B cell (primary cell): ENCODE measurements at regions of chr13 and their contacts with region 1.

Region 1: GRCh38 chr13:30114571-30115256 is 192.6 kb downstream of the KATNAL1 start:
- DNase-seq: peak; percentile 92
- ATAC-seq: peak; percentile 93
- H3K4me3 ChIP-seq: peak overlapping the region; percentile 32 to 72 (median 47)
- H3K4me3 Mint-ChIP-seq: peak overlapping the region; percentile 84
- H3K27ac ChIP-seq: no peak overlapping the region
- H3K27ac Mint-ChIP-seq: peak overlapping the region; percentile 66
- H3K4me1 ChIP-seq: peaks cover 6 to 23% of the 10 kb centered on the region in 2 donors
- H3K4me1 Mint-ChIP-seq: peaks cover 28% of the 10 kb centered on the region
- H3K27me3 ChIP-seq: peaks cover 0 to 5% (median 2%) of the 10 kb centered on the region in 4 experiments
- H3K27me3 Mint-ChIP-seq: peaks cover 21% of the 10 kb centered on the region
- CTCF ChIP-seq: peak; percentile 89

Region 2: DNA sequence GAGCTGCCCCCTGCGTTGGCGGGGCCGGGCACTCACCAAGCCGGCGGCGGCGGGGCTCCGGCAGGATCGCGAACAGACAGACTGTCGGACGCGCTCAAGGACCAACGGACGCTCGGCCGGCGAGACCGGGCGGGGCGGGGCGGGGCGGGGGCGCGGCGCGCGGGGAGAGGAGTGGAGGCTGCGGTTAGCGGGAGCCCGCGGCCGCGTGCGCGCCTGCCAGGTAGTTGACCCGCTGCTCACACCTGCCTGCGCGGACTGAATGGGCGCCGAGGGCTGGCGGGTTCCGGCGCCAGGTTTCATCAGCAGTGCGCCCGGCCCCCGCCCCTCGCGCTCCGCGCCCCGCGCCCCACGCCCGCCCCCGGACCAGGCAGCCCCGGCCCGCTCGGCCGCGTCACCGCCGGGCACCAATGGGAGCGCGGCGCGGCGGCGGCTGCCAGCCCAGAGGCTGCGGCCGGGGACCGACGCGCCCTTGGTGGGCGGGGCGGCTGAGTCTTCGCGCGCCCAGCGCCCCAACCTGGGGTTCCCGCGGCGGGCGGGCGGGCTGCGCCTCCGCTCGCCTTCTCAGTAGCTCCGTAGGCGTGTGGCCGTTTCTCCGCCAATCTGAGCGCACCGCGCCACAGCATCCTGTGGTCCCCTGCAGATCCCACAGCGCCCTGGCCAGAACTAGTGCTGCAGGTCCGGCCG is 519.2 kb before region 1 on chr13 and contains the start of gene SLC7A1:
- CTCF ChIA-PET with region 1: no interaction called
- POLR2A ChIA-PET with region 1: no interaction called
- intact Hi-C with region 1: loop called (anchors 2 kb)
- DNase-seq: peak; percentile 91
- ATAC-seq: peak; percentile 91
- H3K4me3 ChIP-seq: peak within 1 kb of the TSS; percentile 49 to 89 (median 68)
- H3K4me3 Mint-ChIP-seq: peak within 1 kb of the TSS; percentile 92
- H3K27ac ChIP-seq: peak within 1 kb of the TSS; percentile 40 to 82
- H3K27ac Mint-ChIP-seq: peak within 1 kb of the TSS; percentile 92
- H3K4me1 ChIP-seq: peaks cover 9 to 13% of the 10 kb centered on the region in 2 donors
- H3K4me1 Mint-ChIP-seq: peaks cover 34% of the 10 kb centered on the region
- H3K27me3 ChIP-seq: no peaks in the 10 kb centered on the region
- H3K27me3 Mint-ChIP-seq: peaks cover 6% of the 10 kb centered on the region
- CTCF ChIP-seq: no peak
- total RNA-seq, gene SLC7A1: 23.1 and 24.2 TPM in 2 replicates

Region 3: DNA sequence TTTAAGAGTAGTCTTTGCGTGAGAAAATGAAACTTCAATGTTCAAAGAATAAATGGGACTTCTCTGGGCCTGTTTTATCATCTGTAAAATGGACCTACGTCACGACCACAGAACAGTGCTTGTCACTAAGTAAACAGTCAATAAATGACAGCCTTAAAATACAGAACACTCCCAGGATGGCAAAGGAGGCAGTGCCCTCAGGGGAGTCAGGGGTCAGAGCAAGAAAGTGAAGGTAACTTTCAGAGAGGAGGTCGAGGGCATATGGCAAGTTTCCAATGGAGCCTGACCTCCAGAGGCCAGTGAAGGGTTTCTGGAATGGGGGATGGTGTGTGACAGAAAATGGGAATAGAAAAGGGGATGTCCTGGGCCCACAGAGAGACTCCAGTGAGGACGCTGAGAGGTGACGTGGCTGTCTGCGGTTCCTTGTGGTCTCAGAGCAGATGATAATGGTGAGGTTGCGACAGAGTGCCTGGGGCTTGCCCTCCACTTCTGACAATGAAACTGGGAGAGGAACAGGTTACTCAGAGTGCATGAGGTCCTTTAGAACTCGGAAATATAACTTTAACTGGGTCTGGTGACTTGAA is 356.1 kb before region 1 on chr13:
- CTCF ChIA-PET with region 1: interaction called, 10 read pairs
- POLR2A ChIA-PET with region 1: no interaction called
- intact Hi-C with region 1: no loop called
- DNase-seq: peak; percentile 73
- ATAC-seq: peak; percentile 76
- H3K4me3 ChIP-seq: no peak overlapping the region
- H3K4me3 Mint-ChIP-seq: peak overlapping the region; percentile 75
- H3K27ac ChIP-seq: peak overlapping the region; percentile 1 to 68
- H3K27ac Mint-ChIP-seq: peak overlapping the region; percentile 80
- H3K4me1 ChIP-seq: peaks cover 9 to 24% of the 10 kb centered on the region in 2 donors
- H3K4me1 Mint-ChIP-seq: peaks cover 30% of the 10 kb centered on the region
- H3K27me3 ChIP-seq: no peaks in the 10 kb centered on the region
- H3K27me3 Mint-ChIP-seq: peaks cover 1% of the 10 kb centered on the region
- CTCF ChIP-seq: no peak

Region 4: DNA sequence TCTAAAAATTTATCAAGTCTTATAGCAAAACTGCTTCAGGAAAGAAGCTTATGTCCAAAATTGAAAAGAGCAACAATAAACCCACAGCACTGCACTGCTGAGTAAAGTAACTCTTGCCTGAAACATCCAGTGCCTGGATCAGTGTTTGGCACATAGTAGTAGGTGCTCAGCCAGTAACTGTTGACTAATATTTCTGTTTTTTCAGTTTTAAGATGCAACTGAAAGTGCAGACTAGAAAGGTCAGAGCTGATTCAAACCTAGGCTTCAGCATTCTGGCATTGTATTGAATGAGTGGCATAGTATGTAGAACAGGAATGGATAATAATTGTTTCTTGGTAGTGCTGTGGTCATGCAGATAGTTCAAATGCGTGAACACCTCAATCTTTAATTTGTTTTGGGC is 331.9 kb before region 1 on chr13:
- CTCF ChIA-PET with region 1: interaction called, 11 read pairs
- POLR2A ChIA-PET with region 1: no interaction called
- intact Hi-C with region 1: no loop called
- DNase-seq: no peak
- ATAC-seq: no peak
- H3K4me3 ChIP-seq: no peak overlapping the region
- H3K4me3 Mint-ChIP-seq: no peak overlapping the region
- H3K27ac ChIP-seq: no peak overlapping the region
- H3K27ac Mint-ChIP-seq: no peak overlapping the region
- H3K4me1 ChIP-seq: peaks cover 0 to 10% of the 10 kb centered on the region in 2 donors
- H3K4me1 Mint-ChIP-seq: peaks cover 33% of the 10 kb centered on the region
- H3K27me3 ChIP-seq: no peaks in the 10 kb centered on the region
- H3K27me3 Mint-ChIP-seq: no peaks in the 10 kb centered on the region
- CTCF ChIP-seq: no peak

Region 5: GRCh38 chr13:29850224-29850898 is 264.4 kb before region 1 on chr13 and contains the start of gene UBL3:
- CTCF ChIA-PET with region 1: interaction called, 5 read pairs
- POLR2A ChIA-PET with region 1: no interaction called
- intact Hi-C with region 1: loop called (anchors 1 kb)
- DNase-seq: peak; percentile 97
- ATAC-seq: peak; percentile 92
- H3K4me3 ChIP-seq: peak within 1 kb of the TSS; percentile 78 to 99 (median 87)
- H3K4me3 Mint-ChIP-seq: peak within 1 kb of the TSS; percentile 91
- H3K27ac ChIP-seq: peak within 1 kb of the TSS; percentile 93 to 94
- H3K27ac Mint-ChIP-seq: peak within 1 kb of the TSS; percentile 99
- H3K4me1 ChIP-seq: peaks cover 17 to 20% of the 10 kb centered on the region in 2 donors
- H3K4me1 Mint-ChIP-seq: peaks cover 28% of the 10 kb centered on the region
- H3K27me3 ChIP-seq: no peaks in the 10 kb centered on the region
- H3K27me3 Mint-ChIP-seq: no peaks in the 10 kb centered on the region
- CTCF ChIP-seq: no peak
- total RNA-seq, gene UBL3: 26.4 and 27.9 TPM in 2 replicates

Region 6: DNA sequence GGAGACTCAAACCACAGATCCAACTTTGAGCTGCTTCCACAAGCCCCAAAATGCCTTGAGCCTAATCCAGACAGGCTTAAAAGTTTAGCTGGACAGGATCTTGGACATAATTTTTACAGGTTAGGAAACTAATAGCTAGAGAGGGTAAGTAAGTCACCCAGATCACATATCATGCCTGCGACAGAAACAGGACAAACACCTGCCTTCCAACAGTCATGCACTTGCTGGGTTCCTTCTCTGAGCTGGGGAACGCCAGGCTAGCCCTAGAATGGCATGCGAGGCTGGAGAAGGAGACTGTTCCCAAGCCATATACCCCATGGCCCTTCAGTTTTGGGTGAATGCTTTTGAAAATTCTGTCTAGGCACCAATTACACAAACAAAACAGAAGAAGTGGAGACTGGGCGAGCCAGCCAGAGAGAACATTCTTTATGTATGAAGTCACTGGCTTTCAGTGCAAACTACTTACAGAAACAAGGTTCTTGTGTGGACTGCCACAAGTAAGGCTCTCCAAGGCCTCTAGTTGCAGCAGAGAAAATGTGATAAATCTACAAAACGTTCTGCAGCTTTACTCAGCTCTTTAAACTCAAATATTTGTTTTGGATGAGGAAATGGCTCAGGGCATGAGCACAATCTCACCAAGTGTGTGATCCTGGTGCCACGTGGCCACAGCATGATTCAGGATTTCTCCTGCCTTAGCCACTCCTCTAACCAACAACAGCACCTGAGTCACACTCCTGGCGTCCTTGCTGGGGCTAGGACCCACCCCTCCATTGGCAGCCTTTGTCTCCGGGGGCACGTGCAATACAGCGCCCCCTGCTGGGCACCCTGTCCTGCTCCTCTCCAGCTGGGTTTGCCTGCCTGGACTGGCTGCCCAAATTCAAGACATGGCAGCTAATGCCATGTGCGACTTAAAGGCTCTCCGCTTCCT is 190.9 kb before region 1 on chr13:
- CTCF ChIA-PET with region 1: interaction called, 7 read pairs
- POLR2A ChIA-PET with region 1: no interaction called
- intact Hi-C with region 1: loop called (anchors 10 kb)
- DNase-seq: peak; percentile 69
- ATAC-seq: peak; percentile 66
- H3K4me3 ChIP-seq: no peak overlapping the region
- H3K4me3 Mint-ChIP-seq: no peak overlapping the region
- H3K27ac ChIP-seq: no peak overlapping the region
- H3K27ac Mint-ChIP-seq: no peak overlapping the region
- H3K4me1 ChIP-seq: peaks cover 0 to 4% of the 10 kb centered on the region in 2 donors
- H3K4me1 Mint-ChIP-seq: no peaks in the 10 kb centered on the region
- H3K27me3 ChIP-seq: peaks cover 0 to 7% (median 0%) of the 10 kb centered on the region in 4 experiments
- H3K27me3 Mint-ChIP-seq: peaks cover 13% of the 10 kb centered on the region
- CTCF ChIP-seq: peak; percentile 89

Region 7: GRCh38 chr13:30125422-30126073 is 10.8 kb after region 1 on chr13:
- CTCF ChIA-PET with region 1: interaction called, 59 read pairs
- POLR2A ChIA-PET with region 1: no interaction called
- intact Hi-C with region 1: no loop called
- DNase-seq: no peak
- ATAC-seq: no peak
- H3K4me3 ChIP-seq: no peak overlapping the region
- H3K4me3 Mint-ChIP-seq: no peak overlapping the region
- H3K27ac ChIP-seq: no peak overlapping the region
- H3K27ac Mint-ChIP-seq: no peak overlapping the region
- H3K4me1 ChIP-seq: peaks cover 16 to 19% of the 10 kb centered on the region in 2 donors
- H3K4me1 Mint-ChIP-seq: peaks cover 23% of the 10 kb centered on the region
- H3K27me3 ChIP-seq: peaks cover 0 to 3% (median 0%) of the 10 kb centered on the region in 4 experiments
- H3K27me3 Mint-ChIP-seq: no peaks in the 10 kb centered on the region
- CTCF ChIP-seq: no peak

Region 8: DNA sequence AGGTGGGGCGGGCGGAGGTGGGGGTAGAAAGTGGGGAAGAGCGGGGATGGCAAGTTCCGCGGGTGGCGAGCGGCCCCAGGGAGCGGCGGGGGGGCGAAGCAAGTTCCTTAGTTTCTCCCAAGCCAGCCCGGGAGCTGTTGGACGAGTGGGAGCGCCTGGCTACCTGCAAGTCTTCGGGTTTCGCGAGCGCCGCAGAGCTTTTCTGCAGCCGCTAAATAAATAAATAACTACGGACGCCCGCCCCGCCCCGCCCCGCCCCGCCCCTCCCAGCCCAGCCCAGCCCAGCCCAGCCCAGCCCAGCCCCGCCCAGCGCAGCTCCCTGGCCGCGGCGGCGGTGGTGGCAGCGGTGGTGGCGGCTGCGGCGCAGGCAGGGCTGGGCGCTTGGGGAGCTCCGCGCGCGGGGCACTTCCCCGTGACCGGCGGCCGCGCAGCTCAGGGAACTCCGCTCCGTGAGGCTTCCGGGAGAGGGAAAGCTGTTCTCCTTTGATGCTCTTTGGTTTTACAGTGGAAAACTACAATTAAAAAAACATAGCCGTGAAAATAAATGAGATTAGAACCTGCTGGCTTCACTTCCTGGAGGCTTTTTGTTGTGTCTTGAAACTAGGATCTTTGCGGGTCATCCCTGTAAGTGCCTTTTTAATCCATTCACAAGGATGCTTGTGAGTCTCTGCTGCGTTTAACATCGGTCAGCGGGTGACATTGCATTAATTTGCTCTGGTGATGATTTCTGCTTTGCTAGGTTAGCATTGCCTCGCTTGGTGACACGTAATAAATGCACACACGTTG is 307.5 kb after region 1 on chr13 and contains the start of gene UBE2L5:
- CTCF ChIA-PET with region 1: no interaction called
- POLR2A ChIA-PET with region 1: no interaction called
- intact Hi-C with region 1: no loop called
- DNase-seq: peak; percentile 85
- ATAC-seq: peak; percentile 93
- H3K4me3 ChIP-seq: peak within 1 kb of the TSS; percentile 57 to 83 (median 77)
- H3K4me3 Mint-ChIP-seq: peak within 1 kb of the TSS; percentile 92
- H3K27ac ChIP-seq: peak within 1 kb of the TSS; percentile 45 to 71
- H3K27ac Mint-ChIP-seq: peak within 1 kb of the TSS; percentile 90
- H3K4me1 ChIP-seq: peaks cover 18 to 42% of the 10 kb centered on the region in 2 donors
- H3K4me1 Mint-ChIP-seq: peaks cover 47% of the 10 kb centered on the region
- H3K27me3 ChIP-seq: no peaks in the 10 kb centered on the region
- H3K27me3 Mint-ChIP-seq: no peaks in the 10 kb centered on the region
- CTCF ChIP-seq: no peak
- total RNA-seq, gene UBE2L5: 0.57 and 0.58 TPM in 2 replicates

Region 9: GRCh38 chr13:31115616-31116015 is 1000.9 kb after region 1 on chr13:
- CTCF ChIA-PET with region 1: no interaction called
- POLR2A ChIA-PET with region 1: no interaction called
- intact Hi-C with region 1: no loop called
- DNase-seq: no peak
- ATAC-seq: no peak
- H3K4me3 ChIP-seq: no peak overlapping the region
- H3K4me3 Mint-ChIP-seq: no peak overlapping the region
- H3K27ac ChIP-seq: no peak overlapping the region
- H3K27ac Mint-ChIP-seq: no peak overlapping the region
- H3K4me1 ChIP-seq: no peaks in the 10 kb centered on the region
- H3K4me1 Mint-ChIP-seq: no peaks in the 10 kb centered on the region
- H3K27me3 ChIP-seq: peaks cover 0 to 10% (median 3%) of the 10 kb centered on the region in 4 experiments
- H3K27me3 Mint-ChIP-seq: peaks cover 51% of the 10 kb centered on the region
- CTCF ChIP-seq: no peak